AG04450 (cell line): ENCODE measurements at regions of chr5 and their contacts with region 1.

Region 1: GRCh38 chr5:137660349-137660817 is 75.5 kb downstream of the KLHL3 start:
- DNase-seq: peak; percentile 67
- H3K4me3 ChIP-seq: no peak overlapping the region
- H3K27ac ChIP-seq: no peak overlapping the region
- H3K27me3 ChIP-seq: no peaks in the 10 kb centered on the region
- CTCF ChIP-seq: peak; percentile 86

Region 2: DNA sequence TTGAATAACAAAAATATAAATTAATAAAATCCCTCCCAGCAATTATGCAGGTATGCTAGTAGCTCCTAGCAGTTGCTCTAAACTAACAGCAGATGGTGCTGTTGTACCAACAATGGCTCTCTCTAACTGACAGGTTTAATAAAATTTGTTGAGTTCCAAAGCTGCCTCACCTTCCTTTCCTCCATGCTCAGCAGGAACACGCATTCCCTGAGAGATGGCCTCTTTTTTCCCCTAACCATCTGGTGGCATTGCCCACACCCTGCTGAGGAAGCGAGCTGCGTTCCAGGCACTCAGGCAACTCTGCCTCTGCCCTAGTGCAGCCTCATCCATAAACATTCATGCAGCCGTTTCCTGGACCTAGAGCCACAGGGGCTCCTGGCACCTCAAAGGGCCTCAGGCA is 30.7 kb before region 1 on chr5:
- CTCF ChIA-PET with region 1: interaction called, 43 read pairs
- POLR2A ChIA-PET with region 1: no interaction called
- DNase-seq: no peak
- H3K4me3 ChIP-seq: no peak overlapping the region
- H3K27ac ChIP-seq: no peak overlapping the region
- H3K27me3 ChIP-seq: no peaks in the 10 kb centered on the region
- CTCF ChIP-seq: peak; percentile 88

Region 3: GRCh38 chr5:137641148-137641547 is 19.2 kb before region 1 on chr5:
- CTCF ChIA-PET with region 1: interaction called, 13 read pairs
- POLR2A ChIA-PET with region 1: no interaction called
- DNase-seq: no peak
- H3K4me3 ChIP-seq: no peak overlapping the region
- H3K27ac ChIP-seq: no peak overlapping the region
- H3K27me3 ChIP-seq: no peaks in the 10 kb centered on the region
- CTCF ChIP-seq: no peak

Region 4: DNA sequence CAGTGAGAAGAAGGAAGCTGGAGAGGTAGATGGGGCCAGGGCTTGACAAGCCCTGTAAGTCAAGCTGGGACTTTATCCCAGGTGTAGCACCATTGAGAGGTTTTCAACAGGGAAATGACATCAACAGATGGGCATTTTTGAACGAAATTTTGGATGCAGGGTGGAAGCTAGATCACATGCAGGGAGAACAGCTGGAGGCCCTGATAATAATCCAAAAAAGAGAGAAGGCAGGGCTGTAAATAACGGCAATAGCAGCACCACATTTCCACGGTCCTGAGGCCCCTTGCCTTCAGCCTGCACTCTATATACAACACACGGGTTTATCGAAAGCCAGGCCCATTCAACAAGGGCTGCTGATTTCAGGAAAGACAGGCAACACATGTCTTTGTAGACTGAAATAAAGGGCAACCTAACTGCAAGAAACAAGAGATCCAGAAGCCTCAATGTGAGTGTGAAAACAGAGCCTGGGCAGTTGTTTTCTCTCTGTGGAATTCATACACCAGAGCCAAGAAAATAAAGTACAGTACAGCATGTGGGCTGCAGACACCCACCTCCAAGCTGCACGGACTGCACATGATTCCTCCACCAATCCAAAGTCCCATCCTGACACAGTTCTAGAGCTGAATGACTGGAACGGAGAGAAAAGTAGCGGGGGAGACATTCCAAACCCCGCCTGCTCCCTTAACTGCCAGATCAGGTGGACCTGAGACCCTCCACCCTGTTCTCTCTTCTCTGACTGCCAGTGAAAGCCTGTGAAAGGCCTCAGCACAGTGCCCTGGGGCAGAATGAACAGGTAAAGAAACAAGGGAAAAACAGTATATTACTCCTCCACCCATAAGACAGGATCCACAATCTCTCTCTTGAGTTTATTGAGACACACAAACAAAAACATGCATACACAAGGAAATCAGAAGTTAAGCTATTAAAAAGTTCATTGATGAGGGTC is 39.2 kb after region 1 on chr5:
- CTCF ChIA-PET with region 1: interaction called, 11 read pairs
- POLR2A ChIA-PET with region 1: no interaction called
- DNase-seq: no peak
- H3K4me3 ChIP-seq: no peak overlapping the region
- H3K27ac ChIP-seq: no peak overlapping the region
- H3K27me3 ChIP-seq: no peaks in the 10 kb centered on the region
- CTCF ChIP-seq: no peak

Region 5: GRCh38 chr5:137730336-137730735 is 70.0 kb after region 1 on chr5:
- CTCF ChIA-PET with region 1: interaction called, 454 read pairs
- POLR2A ChIA-PET with region 1: interaction called, 6 read pairs
- DNase-seq: no peak
- H3K4me3 ChIP-seq: no peak overlapping the region
- H3K27ac ChIP-seq: no peak overlapping the region
- H3K27me3 ChIP-seq: no peaks in the 10 kb centered on the region
- CTCF ChIP-seq: no peak